Colonic mucosa (tissue), 4 donors: ENCODE measurements at regions of chr16 and their contacts with region 1.

Region 1: GRCh38 chr16:82169861-82170845 is at the start of gene MPHOSPH6:
- DNase-seq: peak; percentile 91
- H3K4me3 ChIP-seq: peak within 1 kb of the TSS; percentile 62
- H3K27ac ChIP-seq: peak within 1 kb of the TSS; percentile 56
- H3K4me1 ChIP-seq: peaks cover 4% of the 10 kb centered on the region
- H3K27me3 ChIP-seq: no peaks in the 10 kb centered on the region
- CTCF ChIP-seq: no peak
- total RNA-seq, gene MPHOSPH6: 18.1 to 22.8 TPM

Region 2: DNA sequence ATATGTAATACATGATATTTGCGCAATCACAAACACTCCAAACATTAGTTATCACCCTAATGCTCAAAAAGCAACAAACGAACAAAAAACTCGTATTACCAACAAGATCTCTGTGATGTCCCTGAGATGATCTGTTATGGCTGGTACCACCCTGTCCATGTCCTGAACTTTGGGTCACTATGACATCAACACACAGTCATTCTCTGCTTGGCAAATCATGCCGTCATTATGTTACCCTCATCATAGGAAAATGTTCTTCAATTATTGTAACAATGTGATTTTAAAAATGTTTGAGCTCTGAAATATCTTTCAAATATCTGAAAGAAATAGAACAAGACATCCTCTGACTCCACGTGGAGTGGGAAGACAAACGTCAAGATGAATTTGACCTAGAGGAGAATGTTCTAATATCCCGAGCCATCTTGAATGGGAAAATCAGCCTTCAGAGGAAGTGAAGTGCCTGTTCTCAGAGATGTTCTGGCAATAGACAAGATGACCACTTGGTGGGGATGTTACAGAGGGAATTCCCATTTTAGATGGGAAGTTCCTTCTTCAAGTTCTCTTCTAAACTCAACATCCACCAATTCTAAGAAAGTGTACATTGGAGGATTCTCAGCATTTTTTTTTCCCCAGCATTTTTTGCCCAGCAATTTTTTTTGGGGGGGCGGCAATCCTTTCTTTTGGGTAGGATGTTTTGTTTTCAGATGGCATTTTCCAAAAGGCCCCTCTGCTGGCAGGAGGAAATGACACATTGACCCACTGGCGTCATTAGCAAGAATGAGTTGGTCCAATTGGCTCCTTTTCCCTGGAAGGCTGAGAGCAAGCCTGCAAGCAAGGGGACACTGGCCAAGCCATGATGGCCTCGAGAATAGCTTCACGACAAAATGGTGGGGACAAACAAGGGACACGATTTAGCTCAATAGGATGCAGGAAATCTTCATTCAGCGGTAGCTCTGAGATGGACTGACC is 138.8 kb before region 1 on chr16:
- intact Hi-C with region 1: loop called (anchors 10 kb)
- DNase-seq: peak; percentile 48
- H3K4me3 ChIP-seq: no peak overlapping the region
- H3K27ac ChIP-seq: no peak overlapping the region
- H3K4me1 ChIP-seq: peaks cover 6% of the 10 kb centered on the region
- H3K27me3 ChIP-seq: no peaks in the 10 kb centered on the region
- CTCF ChIP-seq: peak; percentile 45

Region 3: DNA sequence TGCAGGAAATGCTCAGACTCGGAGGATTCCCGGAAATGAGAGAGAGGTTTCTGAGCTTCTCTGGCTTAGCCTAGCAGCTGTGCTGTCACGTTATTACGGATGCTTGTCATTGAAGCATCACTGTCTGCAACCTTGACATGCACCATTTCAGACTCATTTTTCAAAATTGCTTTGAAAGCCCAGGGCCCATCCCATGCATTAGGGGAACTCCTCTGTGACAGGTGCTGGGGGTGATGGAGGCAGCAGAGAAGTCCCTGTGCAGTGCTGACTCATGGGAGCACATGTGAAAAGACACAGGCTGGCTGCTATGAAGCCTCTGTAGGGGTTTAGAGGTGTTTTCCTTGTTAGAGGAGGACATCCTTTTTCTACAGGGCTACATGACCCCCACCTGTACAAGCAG is 213.9 kb after region 1 on chr16:
- intact Hi-C with region 1: no loop called
- DNase-seq: no peak
- H3K4me3 ChIP-seq: no peak overlapping the region
- H3K27ac ChIP-seq: no peak overlapping the region
- H3K4me1 ChIP-seq: no peaks in the 10 kb centered on the region
- H3K27me3 ChIP-seq: no peaks in the 10 kb centered on the region
- CTCF ChIP-seq: no peak